Activated CD8-positive, alpha-beta T cell treated with anti-CD3 and anti-CD28 coated beads, Interleukin-2, amount 10 ng/mL, durations not matched to agents 7 days and 5 days (primary cell): ENCODE measurements at regions of chr7 and their contacts with region 1.

Region 1: DNA sequence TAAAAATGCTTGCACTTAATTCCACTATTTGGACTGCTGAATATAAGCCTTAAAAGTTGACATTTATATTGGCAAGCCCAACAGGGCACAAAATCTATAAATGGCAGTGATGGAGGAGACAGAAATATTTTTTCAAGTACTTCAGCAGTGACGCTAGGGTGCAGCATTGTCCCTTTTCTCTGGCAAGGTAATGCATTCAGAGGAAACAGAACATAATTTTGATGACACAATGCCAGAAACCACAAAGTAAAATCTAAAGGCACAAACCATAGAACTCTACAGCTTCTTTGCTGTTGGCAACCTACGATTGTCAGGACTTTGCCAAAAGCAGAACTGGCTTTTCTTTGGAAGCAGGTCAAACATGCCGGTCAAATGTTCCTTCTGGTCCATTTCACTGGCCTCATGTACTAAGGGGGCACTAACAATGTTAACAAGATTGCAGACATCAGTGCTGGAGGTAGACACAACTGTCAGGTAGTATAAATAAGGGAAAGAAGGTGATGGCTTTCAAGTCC is 30.9 kb upstream of the FAM133B start:
- DNase-seq: peak; percentile 90
- ATAC-seq: peak; percentile 82
- H3K4me3 Mint-ChIP-seq: peak overlapping the region; percentile 9
- H3K27ac Mint-ChIP-seq: peak overlapping the region; percentile 83
- H3K4me1 Mint-ChIP-seq: peaks cover 54% of the 10 kb centered on the region
- H3K27me3 Mint-ChIP-seq: no peaks in the 10 kb centered on the region

Region 2: DNA sequence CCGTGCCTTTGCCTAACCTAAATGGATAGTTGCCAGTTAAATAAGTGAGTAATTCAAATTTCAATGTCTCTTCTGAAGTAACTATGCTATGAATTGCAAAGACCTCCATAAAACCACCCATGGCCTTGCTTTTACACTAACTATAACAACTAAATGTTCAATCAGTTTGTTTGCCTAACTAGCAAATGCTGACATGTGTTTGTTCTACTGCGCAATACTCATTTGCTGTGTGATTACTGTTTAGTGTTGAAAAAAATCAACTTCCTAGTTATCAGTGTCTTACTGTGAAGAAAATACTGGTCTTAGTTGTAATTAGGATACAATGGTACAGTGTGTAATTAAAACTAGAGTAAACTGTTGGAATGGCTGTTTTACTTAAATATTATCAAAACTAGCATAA is 221.1 kb before region 1 on chr7:
- CTCF ChIA-PET with region 1: no interaction called
- POLR2A ChIA-PET with region 1: no interaction called
- DNase-seq: no peak
- ATAC-seq: no peak
- H3K4me3 Mint-ChIP-seq: no peak overlapping the region
- H3K27ac Mint-ChIP-seq: no peak overlapping the region
- H3K4me1 Mint-ChIP-seq: peaks cover 23% of the 10 kb centered on the region
- H3K27me3 Mint-ChIP-seq: no peaks in the 10 kb centered on the region

Region 3: GRCh38 chr7:92421676-92422435 is 199.2 kb before region 1 on chr7:
- CTCF ChIA-PET with region 1: no interaction called
- POLR2A ChIA-PET with region 1: no interaction called
- DNase-seq: no peak
- ATAC-seq: no peak
- H3K4me3 Mint-ChIP-seq: no peak overlapping the region
- H3K27ac Mint-ChIP-seq: no peak overlapping the region
- H3K4me1 Mint-ChIP-seq: peaks cover 17% of the 10 kb centered on the region
- H3K27me3 Mint-ChIP-seq: peaks cover 15% of the 10 kb centered on the region

Region 4: GRCh38 chr7:92557249-92557648 is 63.8 kb before region 1 on chr7:
- CTCF ChIA-PET with region 1: no interaction called
- POLR2A ChIA-PET with region 1: no interaction called
- DNase-seq: no peak
- ATAC-seq: no peak
- H3K4me3 Mint-ChIP-seq: no peak overlapping the region
- H3K27ac Mint-ChIP-seq: no peak overlapping the region
- H3K4me1 Mint-ChIP-seq: no peaks in the 10 kb centered on the region
- H3K27me3 Mint-ChIP-seq: peaks cover 6% of the 10 kb centered on the region

Region 5: GRCh38 chr7:92633211-92633906 is 12.3 kb after region 1 on chr7:
- CTCF ChIA-PET with region 1: interaction called, 24 read pairs
- POLR2A ChIA-PET with region 1: interaction called, 12 read pairs
- DNase-seq: peak; percentile 45
- ATAC-seq: peak; percentile 76
- H3K4me3 Mint-ChIP-seq: peak overlapping the region; percentile 49
- H3K27ac Mint-ChIP-seq: peak overlapping the region; percentile 84
- H3K4me1 Mint-ChIP-seq: peaks cover 72% of the 10 kb centered on the region
- H3K27me3 Mint-ChIP-seq: no peaks in the 10 kb centered on the region

Region 6: DNA sequence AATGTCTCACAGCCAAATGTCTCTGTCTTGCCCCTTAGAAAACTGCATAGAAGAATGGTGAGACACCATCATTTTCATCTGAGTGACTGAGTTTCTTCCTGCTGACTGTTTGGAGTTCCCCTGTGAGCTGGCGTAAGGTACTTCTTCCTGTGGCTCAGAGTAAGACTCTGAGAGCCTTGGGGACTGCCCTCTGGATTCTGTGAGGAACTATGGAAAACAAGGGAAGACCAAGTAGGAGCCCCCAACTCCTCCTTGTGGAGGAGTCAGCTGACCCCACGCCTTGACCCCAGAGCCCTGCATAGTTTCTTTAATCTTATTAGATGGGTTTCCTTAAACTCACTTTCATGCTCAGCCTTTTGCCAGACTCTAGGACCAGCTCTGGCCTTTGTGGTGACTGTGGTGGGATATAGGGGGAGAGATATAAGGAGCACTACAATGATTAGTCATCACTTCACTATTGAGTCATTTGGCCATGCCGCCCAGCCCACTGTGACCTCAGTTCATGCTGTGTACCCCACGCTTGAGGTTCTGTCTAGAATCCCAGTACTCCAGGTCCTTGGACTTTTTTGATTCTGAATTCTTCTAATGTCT is 20.9 kb after region 1 on chr7:
- CTCF ChIA-PET with region 1: interaction called, 23 read pairs
- POLR2A ChIA-PET with region 1: interaction called, 8 read pairs
- DNase-seq: peak; percentile 73
- ATAC-seq: peak; percentile 74
- H3K4me3 Mint-ChIP-seq: peak overlapping the region; percentile 64
- H3K27ac Mint-ChIP-seq: peak overlapping the region; percentile 94
- H3K4me1 Mint-ChIP-seq: peaks cover 91% of the 10 kb centered on the region
- H3K27me3 Mint-ChIP-seq: no peaks in the 10 kb centered on the region

Region 7: DNA sequence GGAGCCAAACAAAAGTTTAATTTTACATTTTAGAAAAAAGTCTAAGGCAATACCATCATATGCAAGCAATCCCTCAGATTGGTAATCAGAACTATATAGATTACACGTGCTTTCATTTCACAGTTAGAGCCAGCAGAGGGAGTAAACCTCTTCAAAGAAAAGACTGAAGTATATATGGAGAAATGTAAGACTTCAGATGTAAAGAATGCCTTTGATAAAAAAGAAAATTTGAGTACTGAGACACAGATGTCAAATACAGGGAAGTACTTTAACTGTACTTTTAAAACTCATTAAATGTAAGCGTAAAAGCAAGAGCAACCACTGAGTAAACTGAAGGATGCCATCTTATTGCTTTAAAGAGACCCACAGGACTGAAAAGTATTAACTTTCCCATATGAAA is 70.5 kb after region 1 on chr7:
- CTCF ChIA-PET with region 1: interaction called, 27 read pairs
- POLR2A ChIA-PET with region 1: no interaction called
- DNase-seq: peak; percentile 57
- ATAC-seq: peak; percentile 88
- H3K4me3 Mint-ChIP-seq: no peak overlapping the region
- H3K27ac Mint-ChIP-seq: peak overlapping the region; percentile 51
- H3K4me1 Mint-ChIP-seq: peaks cover 64% of the 10 kb centered on the region
- H3K27me3 Mint-ChIP-seq: no peaks in the 10 kb centered on the region